HepG2 (cell line): ENCODE measurements at regions of chr5 and their contacts with region 1.

Region 1: DNA sequence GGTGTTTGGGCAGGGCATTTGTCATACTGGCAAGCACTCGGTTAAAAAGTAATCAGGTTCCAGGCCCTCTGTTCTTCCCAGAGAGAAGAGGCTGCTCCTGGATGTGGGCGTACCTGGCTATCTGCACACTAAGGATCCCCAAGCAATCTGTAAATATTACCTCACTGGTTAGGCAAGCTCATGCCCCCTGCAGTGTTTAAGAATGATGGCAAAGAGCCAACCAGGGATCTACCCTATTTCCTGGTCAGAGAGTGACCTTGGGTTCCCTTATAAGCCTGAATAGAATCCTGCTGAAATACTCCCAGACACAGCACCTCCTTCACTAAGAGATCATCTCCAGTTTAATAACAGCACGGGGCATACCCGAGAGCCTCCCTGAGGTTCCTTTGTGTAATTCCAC is 181.2 kb downstream of the PIK3R1 start:
- DNase-seq: peak; percentile 93
- ATAC-seq: peak; percentile 91
- H3K4me3 ChIP-seq: peak overlapping the region; percentile 9 to 34 (median 13); a peak in 3 of 6 replicates
- H3K27ac ChIP-seq: peak overlapping the region; percentile 58
- H3K4me1 ChIP-seq: peaks cover 39% of the 10 kb centered on the region
- H3K27me3 ChIP-seq: no peaks in the 10 kb centered on the region
- CTCF ChIP-seq: no peak
- EP300 ChIP-seq: peak in 1 of 2 experiments; percentile 69; a peak in 2 of 4 replicates
- POLR2A ChIP-seq: no peak
- RAD21 ChIP-seq: no peak

Region 2: GRCh38 chr5:66406761-66407336 is 1989.9 kb before region 1 on chr5:
- CTCF ChIA-PET with region 1: no interaction called
- POLR2A ChIA-PET with region 1: no interaction called
- in situ Hi-C with region 1: no loop called
- intact Hi-C with region 1: no loop called
- DNase-seq: no peak
- ATAC-seq: no peak
- H3K4me3 ChIP-seq: no peak overlapping the region
- H3K27ac ChIP-seq: no peak overlapping the region
- H3K4me1 ChIP-seq: no peaks in the 10 kb centered on the region
- H3K27me3 ChIP-seq: peaks cover 0 to 2% of the 10 kb centered on the region in 2 experiments; a peak in 1 of 5 replicates
- CTCF ChIP-seq: no peak
- EP300 ChIP-seq: no peak
- POLR2A ChIP-seq: no peak
- RAD21 ChIP-seq: no peak

Region 3: GRCh38 chr5:68460147-68460798 is 63.6 kb after region 1 on chr5:
- CTCF ChIA-PET with region 1: no interaction called
- POLR2A ChIA-PET with region 1: no interaction called
- in situ Hi-C with region 1: no loop called
- intact Hi-C with region 1: loop called (anchors 2 kb)
- DNase-seq: peak; percentile 52
- ATAC-seq: peak; percentile 60
- H3K4me3 ChIP-seq: no peak overlapping the region
- H3K27ac ChIP-seq: no peak overlapping the region
- H3K4me1 ChIP-seq: peaks cover 41% of the 10 kb centered on the region
- H3K27me3 ChIP-seq: peaks cover 0 to 7% of the 10 kb centered on the region in 2 experiments; a peak in 1 of 5 replicates
- CTCF ChIP-seq: peak; percentile 58
- EP300 ChIP-seq: no peak
- POLR2A ChIP-seq: no peak
- RAD21 ChIP-seq: 0 out of 2 replicates have a peak, but pooled peaks have one; percentile 15